Prostate gland (tissue), 2 donors: ENCODE measurements at regions of chr20 and their contacts with region 1.

Region 1: GRCh38 chr20:51595058-51595532 is 52.6 kb upstream of the NFATC2 start:
- DNase-seq: peak; percentile 87
- H3K4me3 ChIP-seq: no peak overlapping the region
- H3K27ac ChIP-seq: peak overlapping the region; percentile 46 to 54
- H3K4me1 ChIP-seq: no peaks in the 10 kb centered on the region
- H3K27me3 ChIP-seq: no peaks in the 10 kb centered on the region
- CTCF ChIP-seq: peak; percentile 52 to 93 (median 91)
- POLR2A ChIP-seq: no peak

Region 2: DNA sequence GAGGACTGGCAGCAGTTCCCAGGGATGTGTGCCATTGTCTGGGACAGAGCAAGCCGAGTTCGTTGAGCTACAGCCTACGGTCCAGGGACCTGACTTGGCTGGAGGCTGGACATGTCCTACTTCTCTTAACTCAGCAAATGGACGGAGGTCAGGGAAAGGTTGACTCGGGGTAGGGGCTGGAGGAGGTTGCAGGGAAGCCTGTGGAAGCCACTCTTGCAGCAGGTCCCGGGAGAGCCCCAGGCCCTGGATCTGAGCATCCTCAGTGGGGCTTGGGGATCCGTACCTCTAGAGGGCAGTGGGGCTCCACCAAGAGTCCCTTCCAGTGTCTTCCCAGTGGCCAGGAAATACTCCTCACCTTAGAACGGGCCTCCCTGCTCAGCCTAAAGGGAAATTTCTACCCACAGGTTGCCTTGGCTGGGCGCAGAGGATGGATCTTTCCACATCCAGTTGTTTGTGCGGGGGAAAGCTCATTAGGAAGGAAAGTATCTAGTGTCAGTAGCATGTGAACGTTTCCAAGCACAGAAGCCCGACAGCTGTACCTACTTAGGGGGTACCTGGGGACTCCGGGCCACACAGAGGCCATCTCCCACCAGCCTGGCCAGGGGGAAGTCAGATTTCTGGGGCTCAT is 222.8 kb before region 1 on chr20:
- intact Hi-C with region 1: loop called (anchors 1 kb)
- DNase-seq: peak; percentile 74
- H3K4me3 ChIP-seq: no peak overlapping the region
- H3K27ac ChIP-seq: no peak overlapping the region
- H3K4me1 ChIP-seq: no peaks in the 10 kb centered on the region
- H3K27me3 ChIP-seq: no peaks in the 10 kb centered on the region
- CTCF ChIP-seq: peak; percentile 49 to 89 (median 80)
- POLR2A ChIP-seq: no peak

Region 3: GRCh38 chr20:51447097-51447771 is 147.9 kb before region 1 on chr20:
- intact Hi-C with region 1: loop called (anchors 5 kb)
- DNase-seq: peak; percentile 28
- H3K4me3 ChIP-seq: no peak overlapping the region
- H3K27ac ChIP-seq: no peak overlapping the region
- H3K4me1 ChIP-seq: no peaks in the 10 kb centered on the region
- H3K27me3 ChIP-seq: no peaks in the 10 kb centered on the region
- CTCF ChIP-seq: no peak
- POLR2A ChIP-seq: no peak

Region 4: DNA sequence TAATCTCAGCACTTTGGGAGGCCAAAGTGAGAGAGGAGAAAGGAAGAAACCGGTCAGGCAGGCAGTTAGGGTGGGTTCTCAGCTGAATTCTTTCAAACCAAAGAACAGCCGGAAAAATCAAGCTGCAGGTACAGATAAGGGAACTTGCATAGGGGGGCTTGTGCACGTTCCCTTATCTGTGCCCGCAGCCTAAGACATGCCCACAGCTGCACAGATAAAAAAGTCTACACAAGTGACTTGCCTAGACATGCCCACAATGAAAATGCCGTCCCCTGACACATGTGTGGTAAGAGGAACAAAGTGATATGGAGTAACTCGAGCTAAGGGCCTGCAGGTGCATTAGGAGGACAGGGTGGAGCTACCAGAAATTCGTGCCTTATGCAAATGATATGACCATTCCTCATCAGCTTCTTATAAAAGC is 383.0 kb after region 1 on chr20:
- intact Hi-C with region 1: no loop called
- DNase-seq: no peak
- H3K4me3 ChIP-seq: no peak overlapping the region
- H3K27ac ChIP-seq: no peak overlapping the region
- H3K4me1 ChIP-seq: no peaks in the 10 kb centered on the region
- H3K27me3 ChIP-seq: no peaks in the 10 kb centered on the region
- CTCF ChIP-seq: no peak
- POLR2A ChIP-seq: no peak